MCF 10A (cell line): ENCODE measurements at regions of chr10 and their contacts with region 1.

Region 1: DNA sequence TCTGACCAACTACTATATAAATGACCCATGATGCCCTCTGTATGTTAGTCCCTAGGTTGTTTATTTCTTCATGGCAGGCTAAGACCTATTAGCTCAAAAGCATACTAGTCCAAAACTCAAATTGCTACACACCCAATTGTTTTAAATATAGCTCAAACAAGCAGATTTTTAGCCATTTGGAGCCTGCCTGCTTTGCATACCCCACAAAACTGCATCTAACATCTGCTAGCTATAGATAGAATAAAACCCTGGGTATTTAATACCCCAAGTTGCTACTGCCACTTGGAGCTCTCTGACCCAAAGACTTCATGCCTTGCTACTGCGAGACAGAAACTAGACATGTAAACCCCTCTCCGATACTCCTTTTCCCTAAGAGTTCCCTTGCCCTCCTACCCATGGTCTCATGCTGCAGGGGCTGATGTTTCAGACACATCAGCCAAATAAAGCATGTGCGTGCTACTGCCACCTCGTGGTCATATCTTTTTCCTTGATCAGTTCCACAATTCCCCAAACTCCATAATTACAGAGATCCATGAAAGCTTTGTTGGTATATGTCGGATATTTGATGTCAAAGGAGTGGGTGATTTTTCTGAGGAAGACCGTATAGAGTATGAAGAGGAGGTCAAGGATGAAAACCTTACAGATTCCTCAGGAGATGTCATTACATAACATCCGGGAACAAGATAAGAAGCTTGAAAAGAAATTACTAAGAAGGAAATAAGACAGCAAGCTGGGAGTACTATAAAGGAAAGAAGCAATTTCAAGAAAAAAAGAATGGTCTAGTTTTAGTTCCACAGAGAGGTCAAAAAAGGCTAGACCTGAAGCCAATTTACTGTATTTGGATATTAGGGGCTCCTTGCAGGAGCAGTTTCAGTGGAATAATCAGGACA is 386.6 kb downstream of the SH2D4B start:
- DNase-seq: peak; percentile 64
- H3K4me3 Mint-ChIP-seq: no peak overlapping the region
- H3K27ac Mint-ChIP-seq: no peak overlapping the region
- H3K4me1 Mint-ChIP-seq: no peaks in the 10 kb centered on the region
- H3K27me3 Mint-ChIP-seq: peaks cover 48% of the 10 kb centered on the region
- CTCF ChIP-seq: peak; percentile 56

Region 2: DNA sequence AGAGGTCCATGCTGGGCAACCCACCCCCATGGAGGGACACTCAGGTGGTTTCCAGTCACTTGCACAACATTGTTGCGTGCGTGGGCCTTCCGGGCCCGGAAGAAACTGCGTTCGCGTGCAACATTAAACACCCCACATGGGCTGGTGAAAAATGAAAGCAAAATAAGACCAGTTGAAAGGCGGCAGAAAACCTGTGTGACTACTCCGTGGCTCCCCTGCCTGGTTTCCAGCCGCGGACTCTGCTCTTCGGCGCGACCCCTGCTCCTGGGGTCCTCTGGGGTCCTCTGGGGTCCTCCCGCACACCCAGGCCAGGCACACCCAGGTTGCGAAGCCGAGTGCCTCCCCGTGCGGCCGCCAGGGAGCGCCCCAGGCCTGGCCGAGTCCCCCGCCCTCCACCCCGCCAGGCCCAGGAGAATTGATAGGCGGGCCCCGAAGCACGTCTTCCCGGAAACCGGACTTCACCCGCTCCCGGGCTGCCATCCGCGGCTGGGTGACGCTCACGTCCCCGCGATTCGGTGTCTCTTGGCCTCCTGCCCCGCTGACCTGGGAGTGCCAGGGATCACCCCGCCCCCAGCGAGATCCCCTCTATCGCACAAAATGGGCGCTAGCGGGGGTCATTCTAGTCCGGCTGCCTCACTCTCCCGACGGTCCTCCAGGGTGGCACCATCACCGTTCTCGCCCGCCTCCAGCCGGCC is 388.5 kb before region 1 on chr10:
- CTCF ChIA-PET with region 1: interaction called, 3 read pairs
- POLR2A ChIA-PET with region 1: no interaction called
- intact Hi-C with region 1: loop called (anchors 1 kb)
- DNase-seq: peak; percentile 76
- H3K4me3 Mint-ChIP-seq: peak overlapping the region; percentile 81
- H3K27ac Mint-ChIP-seq: peak overlapping the region; percentile 88
- H3K4me1 Mint-ChIP-seq: peaks cover 5% of the 10 kb centered on the region
- H3K27me3 Mint-ChIP-seq: no peaks in the 10 kb centered on the region
- CTCF ChIP-seq: peak; percentile 68

Region 3: DNA sequence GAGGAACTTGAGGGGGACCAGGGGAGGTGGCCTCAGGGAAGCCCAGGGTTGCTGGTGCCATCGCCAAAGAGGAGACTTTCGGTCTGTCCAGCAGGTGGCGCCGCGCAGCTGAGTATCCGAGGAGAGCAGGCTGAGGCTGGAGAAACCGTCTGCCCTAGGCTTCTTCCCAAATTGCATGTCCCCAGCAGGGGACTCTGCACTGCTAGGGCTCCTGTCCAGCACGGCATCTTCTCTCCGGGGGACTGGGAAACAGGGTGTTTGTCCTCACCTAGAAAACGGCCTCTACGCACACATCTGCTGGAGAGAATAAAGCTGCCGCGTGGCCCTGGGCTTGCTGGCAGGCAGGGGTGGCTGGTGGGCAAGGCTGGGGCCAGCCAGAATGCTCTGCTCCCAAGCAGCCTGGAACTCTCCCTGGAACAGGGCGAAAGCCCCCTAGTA is 224.7 kb before region 1 on chr10:
- CTCF ChIA-PET with region 1: interaction called, 73 read pairs
- POLR2A ChIA-PET with region 1: no interaction called
- intact Hi-C with region 1: loop called (anchors 1 kb)
- DNase-seq: peak; percentile 79
- H3K4me3 Mint-ChIP-seq: no peak overlapping the region
- H3K27ac Mint-ChIP-seq: no peak overlapping the region
- H3K4me1 Mint-ChIP-seq: no peaks in the 10 kb centered on the region
- H3K27me3 Mint-ChIP-seq: peaks cover 47% of the 10 kb centered on the region
- CTCF ChIP-seq: peak; percentile 80

Region 4: DNA sequence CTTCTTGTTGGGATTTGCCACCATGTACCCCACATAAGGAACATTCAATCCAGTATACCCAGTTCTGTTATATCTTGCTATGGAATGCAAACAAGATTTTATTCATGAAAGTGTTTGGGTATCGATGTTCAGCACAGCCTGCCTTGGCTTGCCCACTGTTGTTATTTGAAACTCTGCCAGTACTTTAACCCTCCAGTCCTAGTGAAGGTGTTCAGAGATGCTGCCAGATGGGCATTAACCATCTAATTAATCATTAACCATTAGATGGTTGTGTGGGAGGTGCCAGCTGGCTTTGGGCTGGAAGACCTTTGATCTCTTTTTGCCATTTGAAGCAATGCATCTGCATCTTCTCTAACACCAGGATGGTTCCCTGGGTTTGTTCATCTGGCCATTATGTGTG is 23.6 kb before region 1 on chr10:
- CTCF ChIA-PET with region 1: interaction called, 20 read pairs
- POLR2A ChIA-PET with region 1: no interaction called
- intact Hi-C with region 1: no loop called
- DNase-seq: no peak
- H3K4me3 Mint-ChIP-seq: no peak overlapping the region
- H3K27ac Mint-ChIP-seq: no peak overlapping the region
- H3K4me1 Mint-ChIP-seq: no peaks in the 10 kb centered on the region
- H3K27me3 Mint-ChIP-seq: peaks cover 52% of the 10 kb centered on the region
- CTCF ChIP-seq: no peak

Region 5: DNA sequence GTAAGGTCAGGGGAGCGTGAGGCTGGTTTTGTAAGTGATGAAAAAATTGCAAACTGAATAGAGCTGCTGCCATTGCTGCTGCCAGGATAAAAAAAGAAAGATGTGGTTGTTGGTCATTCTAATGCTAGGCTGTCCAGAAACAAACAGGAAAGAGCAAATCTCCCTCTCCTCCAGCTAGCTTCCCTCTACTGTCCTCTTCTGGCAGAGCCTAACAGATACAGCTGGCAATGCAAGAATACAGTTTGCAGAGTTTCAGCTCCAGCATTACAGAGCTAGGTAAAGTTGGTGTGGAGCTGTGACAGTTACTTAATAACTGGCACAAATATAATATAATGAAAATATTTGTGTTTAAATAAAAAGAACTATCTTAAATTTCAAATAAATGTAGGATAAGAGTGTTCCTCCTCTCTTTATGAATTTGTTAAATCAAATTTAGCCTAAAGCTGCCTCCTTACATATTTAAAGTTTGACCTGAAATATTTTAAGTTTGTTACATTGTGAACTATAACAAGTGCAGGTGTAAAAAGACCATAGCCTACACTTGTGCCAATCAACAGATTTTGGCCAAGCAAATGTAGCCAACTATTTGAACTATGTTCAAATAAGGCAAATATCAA is 21.1 kb after region 1 on chr10:
- CTCF ChIA-PET with region 1: interaction called, 16 read pairs
- POLR2A ChIA-PET with region 1: no interaction called
- intact Hi-C with region 1: no loop called
- DNase-seq: peak; percentile 32
- H3K4me3 Mint-ChIP-seq: no peak overlapping the region
- H3K27ac Mint-ChIP-seq: no peak overlapping the region
- H3K4me1 Mint-ChIP-seq: no peaks in the 10 kb centered on the region
- H3K27me3 Mint-ChIP-seq: peaks cover 81% of the 10 kb centered on the region
- CTCF ChIP-seq: peak; percentile 40